Common myeloid progenitor, CD34-positive (primary cell): ENCODE measurements at regions of chr17 and their contacts with region 1.

Region 1: DNA sequence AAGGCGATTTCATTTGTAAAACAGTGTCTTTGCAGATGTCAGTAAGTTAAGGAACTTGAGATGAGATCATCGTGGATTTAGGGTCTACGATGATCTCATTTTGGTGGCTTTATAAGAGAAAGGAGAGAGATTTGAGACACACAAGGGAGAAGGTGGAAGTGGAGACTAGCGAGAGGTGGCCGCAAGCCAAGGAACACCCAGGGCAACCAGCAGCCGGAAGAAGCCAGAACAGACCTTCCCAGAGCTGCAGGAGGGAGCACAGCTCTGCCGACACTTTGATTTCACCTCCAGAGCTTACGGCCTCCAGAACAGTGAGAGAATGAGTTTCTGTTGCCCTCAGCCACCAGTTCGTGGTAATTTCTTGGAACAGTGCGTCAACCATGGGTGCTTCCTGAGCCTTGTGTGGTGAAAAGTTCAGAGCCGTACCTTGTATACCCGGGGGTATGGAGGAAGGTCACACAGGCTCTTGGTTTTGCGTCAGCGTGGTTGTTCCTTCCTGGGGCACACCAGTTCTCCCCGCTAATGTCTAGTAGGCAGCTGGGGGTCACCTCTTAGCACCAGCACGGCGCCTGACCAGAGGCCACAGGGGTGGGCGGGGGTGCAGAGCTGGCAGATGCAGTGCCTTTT is 12.9 kb upstream of the SEC14L1 start:
- DNase-seq: peak; percentile 54 to 84 (median 83)
- H3K4me3 ChIP-seq: peak overlapping the region in 6 of 7 experiments; percentile 3 to 71 (median 34)
- H3K27ac ChIP-seq: peak overlapping the region; percentile 21 to 41
- H3K4me1 ChIP-seq: peaks cover 9 to 32% (median 24%) of the 10 kb centered on the region in 4 experiments
- H3K27me3 ChIP-seq: no peaks in the 10 kb centered on the region

Region 2: DNA sequence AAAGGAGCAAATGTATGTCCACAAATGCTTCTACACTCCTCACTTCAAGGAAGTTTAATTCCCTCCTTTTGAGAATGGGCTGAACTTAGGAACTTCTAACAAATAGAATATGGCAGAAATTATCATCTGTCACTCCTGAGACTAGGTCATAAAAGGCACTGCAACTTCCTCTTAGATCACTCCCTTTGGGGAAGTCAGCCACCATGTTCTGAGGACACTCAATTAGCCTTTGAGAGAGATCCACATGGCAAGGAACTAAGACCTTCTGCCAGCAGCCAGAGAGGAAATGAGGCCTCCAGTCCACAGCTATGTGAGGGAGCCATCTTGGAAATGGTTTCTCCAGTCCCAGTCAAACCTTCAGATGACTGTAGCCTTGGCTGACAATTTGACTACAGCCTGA is 100.6 kb before region 1 on chr17:
- CTCF ChIA-PET with region 1: no interaction called
- POLR2A ChIA-PET with region 1: no interaction called
- DNase-seq: peak; percentile 8 to 53 (median 38)
- H3K4me3 ChIP-seq: no peak overlapping the region
- H3K27ac ChIP-seq: no peak overlapping the region
- H3K4me1 ChIP-seq: no peaks in the 10 kb centered on the region
- H3K27me3 ChIP-seq: no peaks in the 10 kb centered on the region

Region 3: DNA sequence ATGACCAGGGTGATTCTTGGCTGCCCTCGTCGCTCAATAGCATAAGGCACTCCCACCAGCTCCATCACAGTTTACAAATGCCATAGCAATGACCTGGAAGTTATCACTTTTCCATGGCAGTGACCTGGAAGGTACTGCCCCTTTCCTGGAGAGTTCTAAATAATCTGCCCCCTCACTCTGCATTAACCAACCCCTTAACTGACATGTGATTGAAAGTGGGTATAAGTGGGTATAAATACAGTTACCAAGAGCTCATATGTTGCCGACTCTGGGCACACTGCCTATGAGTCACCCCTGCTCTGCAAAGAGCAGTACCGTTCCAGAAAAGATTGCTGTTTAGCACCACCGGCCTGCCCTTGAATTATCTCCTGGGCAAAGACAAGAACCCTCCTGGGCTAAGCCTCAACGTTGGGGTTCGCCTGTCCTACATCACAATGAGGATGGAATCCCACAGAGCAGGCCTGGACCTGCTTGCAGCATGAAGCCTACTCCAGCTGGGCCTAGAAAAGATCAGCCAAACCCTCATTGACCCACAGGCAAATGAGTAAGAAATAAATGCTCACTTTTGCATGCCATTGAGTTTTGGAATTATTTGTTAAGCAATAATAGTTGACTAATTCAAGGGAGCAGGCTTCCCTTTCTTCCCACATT is 82.3 kb before region 1 on chr17:
- CTCF ChIA-PET with region 1: no interaction called
- POLR2A ChIA-PET with region 1: no interaction called
- DNase-seq: no peak
- H3K4me3 ChIP-seq: no peak overlapping the region
- H3K27ac ChIP-seq: no peak overlapping the region
- H3K4me1 ChIP-seq: no peaks in the 10 kb centered on the region
- H3K27me3 ChIP-seq: peaks cover 0 to 11% (median 0%) of the 10 kb centered on the region in 5 experiments

Region 4: GRCh38 chr17:77068915-77069314 is 58.9 kb before region 1 on chr17:
- CTCF ChIA-PET with region 1: no interaction called
- POLR2A ChIA-PET with region 1: no interaction called
- DNase-seq: no peak
- H3K4me3 ChIP-seq: no peak overlapping the region
- H3K27ac ChIP-seq: no peak overlapping the region
- H3K4me1 ChIP-seq: peaks cover 0 to 5% (median 0%) of the 10 kb centered on the region in 4 experiments
- H3K27me3 ChIP-seq: peaks cover 0 to 5% (median 0%) of the 10 kb centered on the region in 5 experiments

Region 5: GRCh38 chr17:77096570-77097214 is 31.2 kb before region 1 on chr17:
- CTCF ChIA-PET with region 1: interaction called, 10 read pairs
- POLR2A ChIA-PET with region 1: interaction called, 3 read pairs
- DNase-seq: peak in 2 of 3 donors; percentile 69 to 70
- H3K4me3 ChIP-seq: no peak overlapping the region
- H3K27ac ChIP-seq: no peak overlapping the region
- H3K4me1 ChIP-seq: peaks cover 3 to 28% (median 22%) of the 10 kb centered on the region in 4 experiments
- H3K27me3 ChIP-seq: no peaks in the 10 kb centered on the region

Region 6: DNA sequence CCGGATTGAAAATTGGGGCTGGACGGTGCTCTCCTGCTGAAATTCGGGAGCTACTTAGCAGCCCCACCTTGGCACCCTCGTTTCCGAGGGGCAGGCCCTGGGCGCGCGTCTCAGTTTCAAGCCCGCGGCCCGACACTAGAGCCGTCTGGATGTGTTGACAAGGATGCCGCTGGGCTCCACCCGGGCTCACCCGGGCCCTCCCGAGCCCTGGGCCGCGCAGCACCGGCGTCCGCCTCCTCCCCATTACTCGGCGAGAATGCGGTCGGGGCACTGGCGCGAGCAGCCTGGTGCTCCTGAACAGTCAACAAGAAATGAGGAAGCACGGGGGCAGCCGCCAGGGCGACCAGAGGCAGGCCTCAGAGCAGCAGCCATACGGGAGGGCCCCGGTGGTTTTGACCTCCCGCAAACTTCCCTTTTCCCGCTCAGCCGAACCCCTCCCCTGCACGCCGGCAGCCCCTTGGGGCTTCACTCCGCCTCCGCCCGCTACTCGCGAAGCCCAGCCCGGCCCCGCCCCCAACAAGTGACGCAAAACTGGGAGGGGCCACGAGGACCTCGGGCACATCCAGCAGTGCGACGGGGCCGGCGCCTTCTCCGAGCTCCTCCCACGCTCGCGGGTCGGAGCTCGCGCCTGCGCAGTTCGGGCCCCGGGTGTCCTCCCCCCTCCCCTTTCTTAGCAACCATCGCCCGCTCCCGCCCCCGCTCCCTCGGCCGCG is 12.5 kb after region 1 on chr17:
- CTCF ChIA-PET with region 1: interaction called, 26 read pairs
- POLR2A ChIA-PET with region 1: interaction called, 22 read pairs
- DNase-seq: peak; percentile 99 to 100 (median 100)
- H3K4me3 ChIP-seq: peak overlapping the region in 4 of 7 experiments; percentile 46 to 56 (median 55)
- H3K27ac ChIP-seq: peak overlapping the region; percentile 78 to 90
- H3K4me1 ChIP-seq: peaks cover 12 to 32% (median 20%) of the 10 kb centered on the region in 4 experiments
- H3K27me3 ChIP-seq: no peaks in the 10 kb centered on the region